GM12878 (cell line): ENCODE measurements at regions of chr2 and their contacts with region 1.

Region 1: DNA sequence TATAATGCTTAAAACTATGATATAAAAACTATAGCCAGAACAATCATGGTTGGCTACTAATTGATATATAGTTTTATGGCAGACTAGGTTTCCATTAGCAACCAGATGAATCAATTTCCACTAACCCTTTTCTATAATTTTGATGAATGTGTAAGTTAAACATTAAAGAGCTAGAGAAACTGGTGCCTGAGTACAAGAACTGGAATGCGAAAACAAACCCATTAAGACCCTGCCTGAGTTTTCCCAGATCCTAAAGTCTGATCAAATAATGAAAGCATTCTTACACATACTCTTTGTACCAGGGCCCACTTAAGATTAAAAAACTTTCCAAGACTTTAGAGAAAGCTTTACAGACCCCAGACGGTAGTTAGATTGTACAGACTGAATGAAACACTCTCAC is 21.3 kb downstream of the MRPL19 start:
- DNase-seq: no peak
- ATAC-seq: no peak
- H3K4me3 ChIP-seq: no peak overlapping the region
- H3K27ac ChIP-seq: no peak overlapping the region
- H3K4me1 ChIP-seq: no peaks in the 10 kb centered on the region
- H3K27me3 ChIP-seq: no peaks in the 10 kb centered on the region
- CTCF ChIP-seq: no peak
- EP300 ChIP-seq: no peak
- POLR2A ChIP-seq: no peak
- RAD21 ChIP-seq: no peak

Region 2: DNA sequence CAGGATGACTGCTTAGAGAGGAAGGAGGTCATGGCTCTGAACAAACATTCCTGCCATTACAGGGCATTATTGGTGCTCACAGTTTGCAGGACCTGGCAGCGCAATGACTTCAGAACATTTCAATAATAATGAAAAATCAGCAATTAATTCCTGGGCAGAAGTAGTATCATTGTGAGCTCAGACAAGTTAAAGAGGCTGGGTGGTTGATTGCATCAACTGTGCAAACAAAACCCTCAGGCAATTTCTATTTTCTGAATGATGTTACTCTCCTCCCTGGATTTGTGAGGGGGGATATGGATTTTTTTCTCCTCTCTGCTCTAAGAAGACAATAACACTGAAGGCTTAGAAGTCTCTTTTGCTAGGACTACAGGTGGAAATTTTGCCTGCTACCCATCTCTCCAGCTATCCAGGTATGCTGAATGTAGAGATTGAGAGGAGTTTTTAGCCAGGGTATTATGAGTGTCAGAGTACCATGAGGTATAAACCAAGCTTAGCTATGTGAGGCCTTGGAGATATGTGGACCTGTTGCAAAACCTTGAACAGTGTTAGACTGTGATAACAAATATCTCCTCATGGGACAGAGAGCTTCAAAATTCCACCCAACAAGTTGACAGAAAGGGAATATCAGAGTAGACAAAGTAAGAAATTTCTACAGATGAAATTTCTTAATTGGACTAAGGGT is 300.3 kb before region 1 on chr2:
- CTCF ChIA-PET with region 1: no interaction called
- POLR2A ChIA-PET with region 1: no interaction called
- RAD21 ChIA-PET with region 1: no interaction called
- SMC1A ChIA-PET with region 1: no interaction called
- in situ Hi-C with region 1: no loop called
- intact Hi-C with region 1: no loop called
- DNase-seq: no peak
- ATAC-seq: no peak
- H3K4me3 ChIP-seq: no peak overlapping the region
- H3K27ac ChIP-seq: no peak overlapping the region
- H3K4me1 ChIP-seq: no peaks in the 10 kb centered on the region
- H3K27me3 ChIP-seq: no peaks in the 10 kb centered on the region
- CTCF ChIP-seq: no peak
- EP300 ChIP-seq: no peak
- POLR2A ChIP-seq: no peak
- RAD21 ChIP-seq: no peak

Region 3: DNA sequence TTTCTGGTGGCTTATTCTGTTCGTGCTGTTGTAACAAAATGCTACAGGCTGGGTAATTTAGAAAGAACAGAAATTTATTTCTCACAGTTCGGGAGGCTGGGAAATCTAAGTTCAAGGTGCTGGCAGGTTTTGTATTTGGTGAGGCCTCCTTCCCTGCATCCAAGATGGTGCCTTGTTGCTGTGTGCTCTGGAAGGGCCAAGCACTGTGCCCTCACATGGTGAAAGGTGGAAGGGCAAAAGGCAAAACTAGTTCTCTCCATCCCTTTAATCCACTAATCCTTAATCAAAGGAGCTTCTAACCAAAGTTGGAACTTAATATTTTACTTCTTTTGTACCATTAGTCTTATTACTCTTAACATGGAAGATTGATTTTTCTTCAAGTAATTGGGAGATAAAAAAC is 13.9 kb before region 1 on chr2:
- CTCF ChIA-PET with region 1: interaction called, 12 read pairs
- POLR2A ChIA-PET with region 1: interaction called, 5 read pairs
- RAD21 ChIA-PET with region 1: interaction called, 5 read pairs
- SMC1A ChIA-PET with region 1: interaction called, 12 read pairs
- in situ Hi-C with region 1: no loop called
- intact Hi-C with region 1: no loop called
- DNase-seq: no peak
- ATAC-seq: peak; percentile 34; the same call in 1 of the 3 replicates
- H3K4me3 ChIP-seq: no peak overlapping the region
- H3K27ac ChIP-seq: no peak overlapping the region
- H3K4me1 ChIP-seq: no peaks in the 10 kb centered on the region
- H3K27me3 ChIP-seq: no peaks in the 10 kb centered on the region
- CTCF ChIP-seq: 0 out of 6 replicates have a peak, but pooled peaks of 1 of the 3 experiments have one; percentile 7
- EP300 ChIP-seq: no peak
- POLR2A ChIP-seq: no peak
- RAD21 ChIP-seq: no peak